Ascending aorta (tissue), 2 donors: ENCODE measurements at regions of chr2 and their contacts with region 1.

Region 1: DNA sequence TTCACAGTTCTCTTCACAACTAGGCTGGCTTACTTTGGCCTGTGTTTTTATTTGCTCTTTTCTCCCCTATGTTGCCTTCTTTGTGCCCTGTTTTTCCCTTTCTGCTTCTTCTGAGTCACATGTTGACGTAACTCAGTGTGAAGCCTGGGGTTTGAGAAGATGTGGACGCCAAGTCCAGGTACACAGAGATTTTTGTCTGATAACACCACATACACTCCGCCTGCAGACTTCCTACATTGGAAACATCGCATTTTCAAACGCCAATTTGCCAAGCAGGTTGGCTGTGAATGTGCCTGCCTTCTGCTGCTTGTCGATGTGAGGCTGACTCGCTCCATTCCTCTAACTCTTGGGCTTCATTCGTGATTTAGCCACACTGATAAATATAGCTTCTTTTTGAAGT is 62.6 kb upstream of the FN1 start:
- DNase-seq: no peak
- H3K4me3 ChIP-seq: no peak overlapping the region
- H3K27ac ChIP-seq: peak overlapping the region; percentile 57
- H3K4me1 ChIP-seq: peaks cover 0 to 20% of the 10 kb centered on the region in 2 donors
- H3K27me3 ChIP-seq: no peaks in the 10 kb centered on the region
- CTCF ChIP-seq: no peak

Region 2: DNA sequence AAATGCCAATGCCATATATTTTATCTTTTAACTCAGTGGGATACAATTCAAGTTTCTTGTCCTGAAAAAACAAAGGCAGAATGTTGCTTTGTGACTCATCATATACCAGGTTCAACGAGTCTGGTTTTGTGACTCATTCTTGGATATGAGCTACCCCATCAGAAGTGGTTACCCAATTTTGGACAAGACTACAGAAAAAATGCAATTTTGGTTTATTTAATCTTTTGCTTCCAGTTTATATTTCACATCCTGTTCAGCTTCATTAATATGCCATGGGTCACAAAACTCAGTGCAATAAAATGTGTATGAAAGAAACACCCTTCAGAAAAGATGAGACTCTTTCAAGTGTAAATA is 87.5 kb before region 1 on chr2:
- intact Hi-C with region 1: no loop called
- DNase-seq: no peak
- H3K4me3 ChIP-seq: no peak overlapping the region
- H3K27ac ChIP-seq: peak overlapping the region; percentile 55 to 64
- H3K4me1 ChIP-seq: peaks cover 0 to 4% of the 10 kb centered on the region in 2 donors
- H3K27me3 ChIP-seq: no peaks in the 10 kb centered on the region
- CTCF ChIP-seq: no peak

Region 3: DNA sequence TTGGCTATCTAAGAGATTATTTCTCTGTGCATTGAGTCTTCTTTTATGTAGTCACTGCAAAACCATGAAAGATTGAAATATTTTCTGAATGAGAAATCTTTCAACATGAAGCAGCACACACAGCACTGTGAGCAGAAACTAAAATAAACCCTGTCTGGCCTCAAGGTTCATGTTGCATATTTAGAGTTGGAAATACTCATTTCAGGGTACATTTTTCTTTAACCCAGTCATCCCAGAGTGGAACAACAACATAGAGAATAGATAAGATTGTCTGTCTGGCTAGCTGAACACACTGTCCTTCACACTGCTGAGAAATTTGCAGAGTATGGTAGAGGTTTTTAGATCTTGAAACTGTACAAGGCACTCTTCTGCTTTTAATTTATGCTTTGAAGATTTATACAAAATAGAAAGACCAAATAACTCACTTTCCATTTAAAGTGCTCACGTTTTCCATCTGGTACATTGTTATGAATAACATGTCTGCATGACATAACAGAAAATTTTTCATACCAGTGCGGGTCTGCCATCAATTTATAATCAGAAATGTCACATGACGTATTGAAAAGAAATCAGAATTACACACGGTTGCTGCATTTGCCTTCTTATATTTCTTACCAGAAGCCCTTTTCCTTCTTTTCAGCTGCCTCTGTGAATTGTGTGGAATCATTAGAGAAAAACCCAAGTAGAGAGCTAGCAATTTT is 37.6 kb before region 1 on chr2:
- intact Hi-C with region 1: loop called (anchors 5 kb)
- DNase-seq: no peak
- H3K4me3 ChIP-seq: peak overlapping the region in 1 of 2 donors; percentile 27
- H3K27ac ChIP-seq: peak overlapping the region; percentile 61 to 78
- H3K4me1 ChIP-seq: peaks cover 10 to 12% of the 10 kb centered on the region in 2 donors
- H3K27me3 ChIP-seq: no peaks in the 10 kb centered on the region
- CTCF ChIP-seq: no peak